Activated T-helper 1 cell treated with anti-CD3 and anti-CD28 coated beads, Interleukin-12 subunit alpha, Interleukin-12 subunit beta, Interleukin-2, Interleukin-4 antibody, amounts not matched to agents 30 ng/mL and 10 ng/mL and 1 ng/mL, durations not matched to agents 14 hours and 24 hours and 36 hours (primary cell): ENCODE measurements at regions of chr6 and their contacts with region 1.

Region 1: GRCh38 chr6:38897507-38897906 is 151.1 kb upstream of the GLP1R start:
- DNase-seq: no peak
- H3K4me3 Mint-ChIP-seq: no peak overlapping the region
- H3K27ac Mint-ChIP-seq: no peak overlapping the region
- H3K4me1 Mint-ChIP-seq: no peaks in the 10 kb centered on the region
- H3K27me3 Mint-ChIP-seq: peaks cover 6% of the 10 kb centered on the region

Region 2: GRCh38 chr6:38933432-38933831 is 35.9 kb after region 1 on chr6:
- intact Hi-C with region 1: loop called (anchors 5 kb)
- DNase-seq: no peak
- H3K4me3 Mint-ChIP-seq: no peak overlapping the region
- H3K27ac Mint-ChIP-seq: no peak overlapping the region
- H3K4me1 Mint-ChIP-seq: no peaks in the 10 kb centered on the region
- H3K27me3 Mint-ChIP-seq: peaks cover 13% of the 10 kb centered on the region